ENCODE measurements at regions of chr1 and their contacts with region 1.

Region 1: GRCh38 chr1:27568300-27569087 is 35.5 kb downstream of the AHDC1 start:
- DNase-seq: peak; percentile 70
- ATAC-seq: peak; percentile 85
- H3K4me3 ChIP-seq: peak overlapping the region; percentile 35 to 41
- H3K27ac ChIP-seq: peak overlapping the region; percentile 94
- H3K4me1 ChIP-seq: peaks cover 92% of the 10 kb centered on the region
- H3K27me3 ChIP-seq: no peaks in the 10 kb centered on the region
- CTCF ChIP-seq: peak; percentile 98

Region 2: GRCh38 chr1:27556781-27557595 is 11.5 kb before region 1 on chr1:
- CTCF ChIA-PET with region 1: interaction called, 46 read pairs
- POLR2A ChIA-PET with region 1: interaction called, 3 read pairs
- in situ Hi-C with region 1: no loop called
- intact Hi-C with region 1: no loop called
- DNase-seq: no peak
- ATAC-seq: peak; percentile 77
- H3K4me3 ChIP-seq: no peak overlapping the region
- H3K27ac ChIP-seq: peak overlapping the region; percentile 78; the same call in 1 of the 2 replicates
- H3K4me1 ChIP-seq: peaks cover 52% of the 10 kb centered on the region
- H3K27me3 ChIP-seq: no peaks in the 10 kb centered on the region
- CTCF ChIP-seq: peak; percentile 93

Region 3: GRCh38 chr1:27583479-27583878 is 15.0 kb after region 1 on chr1:
- CTCF ChIA-PET with region 1: no interaction called
- POLR2A ChIA-PET with region 1: no interaction called
- in situ Hi-C with region 1: no loop called
- intact Hi-C with region 1: no loop called
- DNase-seq: no peak
- ATAC-seq: no peak
- H3K4me3 ChIP-seq: no peak overlapping the region
- H3K27ac ChIP-seq: no peak overlapping the region
- H3K4me1 ChIP-seq: peaks cover 7% of the 10 kb centered on the region
- H3K27me3 ChIP-seq: no peaks in the 10 kb centered on the region
- CTCF ChIP-seq: no peak

Region 4: GRCh38 chr1:27594562-27595510 is 26.3 kb after region 1 on chr1:
- CTCF ChIA-PET with region 1: interaction called, 12 read pairs
- POLR2A ChIA-PET with region 1: interaction called, 3 read pairs
- in situ Hi-C with region 1: no loop called
- intact Hi-C with region 1: loop called (anchors 5 kb)
- DNase-seq: no peak
- ATAC-seq: peak; percentile 5; the same call in 1 of the 2 replicates
- H3K4me3 ChIP-seq: no peak overlapping the region
- H3K27ac ChIP-seq: peak overlapping the region; percentile 18
- H3K4me1 ChIP-seq: peaks cover 89% of the 10 kb centered on the region
- H3K27me3 ChIP-seq: no peaks in the 10 kb centered on the region
- CTCF ChIP-seq: no peak

Region 5: DNA sequence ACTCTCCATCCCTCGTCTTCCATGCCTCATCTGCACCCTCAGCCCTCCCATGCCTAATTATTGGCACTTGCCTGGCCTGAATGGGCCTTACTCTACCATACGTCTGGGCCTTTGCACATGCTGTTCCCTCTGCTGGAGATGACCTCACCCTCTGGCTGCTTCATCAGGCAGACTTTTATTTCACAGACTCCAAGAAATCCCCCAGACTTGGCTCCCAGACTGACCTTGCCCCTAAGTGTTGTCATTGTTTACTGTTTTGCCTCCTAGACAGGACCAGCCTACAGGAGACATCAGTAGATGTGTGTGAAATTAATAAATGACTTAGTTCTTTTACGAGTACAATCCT is 40.7 kb after region 1 on chr1:
- CTCF ChIA-PET with region 1: interaction called, 16 read pairs
- POLR2A ChIA-PET with region 1: interaction called, 3 read pairs
- in situ Hi-C with region 1: no loop called
- intact Hi-C with region 1: loop called (anchors 5 kb)
- DNase-seq: no peak
- ATAC-seq: no peak
- H3K4me3 ChIP-seq: no peak overlapping the region
- H3K27ac ChIP-seq: no peak overlapping the region
- H3K4me1 ChIP-seq: peaks cover 16% of the 10 kb centered on the region
- H3K27me3 ChIP-seq: no peaks in the 10 kb centered on the region
- CTCF ChIP-seq: no peak

Region 6: GRCh38 chr1:27662707-27663393 is 94.4 kb after region 1 on chr1:
- CTCF ChIA-PET with region 1: no interaction called
- POLR2A ChIA-PET with region 1: interaction called, 16 read pairs
- in situ Hi-C with region 1: no loop called
- intact Hi-C with region 1: no loop called
- DNase-seq: peak; percentile 79
- ATAC-seq: peak; percentile 78
- H3K4me3 ChIP-seq: no peak overlapping the region
- H3K27ac ChIP-seq: peak overlapping the region; percentile 42
- H3K4me1 ChIP-seq: peaks cover 18% of the 10 kb centered on the region
- H3K27me3 ChIP-seq: no peaks in the 10 kb centered on the region
- CTCF ChIP-seq: peak; percentile 93

Measured in Panc1 (cell line).